ENCODE measurements at regions of chr4 and their contacts with region 1.

Region 1: DNA sequence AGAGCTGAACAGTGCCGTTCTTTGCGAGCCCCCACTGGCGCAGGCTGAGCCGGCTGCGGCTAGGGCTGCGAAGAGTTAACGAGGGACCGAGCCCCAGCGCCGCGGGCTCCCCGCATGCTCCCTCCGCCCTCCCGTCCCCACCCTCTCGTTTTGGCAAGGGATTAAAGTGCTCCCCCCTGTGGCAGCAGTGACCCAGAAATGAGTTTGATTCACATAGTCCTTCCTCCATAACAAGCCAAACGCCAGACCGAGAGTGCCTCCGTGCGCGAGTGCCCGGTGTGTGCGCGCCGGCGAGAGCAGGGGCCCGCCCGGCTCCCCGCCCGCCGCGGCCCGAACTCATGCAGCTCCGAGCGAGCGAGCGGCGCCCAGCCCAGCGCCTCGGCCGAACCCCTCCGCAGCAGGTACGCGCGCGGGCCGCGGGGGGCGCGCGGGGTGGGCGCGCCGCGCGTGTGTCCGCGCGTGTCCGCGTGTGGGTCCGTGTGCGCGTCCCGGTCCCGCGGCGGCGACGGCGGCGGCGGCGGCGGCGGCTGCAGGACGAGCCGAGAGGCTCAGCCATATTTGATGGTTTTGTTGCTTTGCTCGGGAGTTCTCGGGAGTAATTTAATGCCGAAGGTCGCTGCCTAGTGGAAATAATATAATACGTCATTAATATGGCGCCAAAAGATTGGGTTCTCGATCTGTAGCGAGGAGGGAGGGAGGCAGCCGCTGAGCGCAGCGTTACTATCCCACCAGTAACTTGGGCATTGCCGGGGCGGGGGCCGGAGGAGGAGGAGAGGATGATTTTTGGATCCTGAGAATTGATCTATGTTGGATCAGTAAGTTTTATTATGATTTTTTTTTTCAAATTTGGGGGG is at the start of gene JADE1:
- DNase-seq: peak; percentile 82 to 95 (median 90)
- ATAC-seq: peak; percentile 58
- H3K4me3 ChIP-seq: peak within 1 kb of the TSS; percentile 80 to 93
- H3K4me3 Mint-ChIP-seq: peak within 1 kb of the TSS; percentile 97
- H3K27ac ChIP-seq: peak within 1 kb of the TSS; percentile 85 to 95
- H3K27ac Mint-ChIP-seq: peak within 1 kb of the TSS; percentile 99
- H3K4me1 ChIP-seq: peaks cover 12% of the 10 kb centered on the region
- H3K4me1 Mint-ChIP-seq: peaks cover 22% of the 10 kb centered on the region
- H3K27me3 ChIP-seq: no peaks in the 10 kb centered on the region
- H3K27me3 Mint-ChIP-seq: no peaks in the 10 kb centered on the region
- CTCF ChIP-seq: peak; percentile 43
- total RNA-seq, gene JADE1: 77.5 to 82.2 TPM

Region 2: GRCh38 chr4:127880764-127881562 is 928.7 kb before region 1 on chr4 and contains the start of gene PLK4:
- CTCF ChIA-PET with region 1: no interaction called
- POLR2A ChIA-PET with region 1: interaction called, 4 read pairs
- intact Hi-C with region 1: loop called in 1 of 2 experiments (anchors 5 kb)
- DNase-seq: peak; percentile 87 to 97 (median 94)
- ATAC-seq: peak; percentile 92
- H3K4me3 ChIP-seq: peak within 1 kb of the TSS; percentile 75 to 84
- H3K4me3 Mint-ChIP-seq: peak within 1 kb of the TSS; percentile 98
- H3K27ac ChIP-seq: peak within 1 kb of the TSS; percentile 71 to 87
- H3K27ac Mint-ChIP-seq: peak within 1 kb of the TSS; percentile 97
- H3K4me1 ChIP-seq: peaks cover 19% of the 10 kb centered on the region
- H3K4me1 Mint-ChIP-seq: peaks cover 23% of the 10 kb centered on the region
- H3K27me3 ChIP-seq: no peaks in the 10 kb centered on the region
- H3K27me3 Mint-ChIP-seq: no peaks in the 10 kb centered on the region
- CTCF ChIP-seq: no peak
- total RNA-seq, gene PLK4: 4.5 to 5.9 TPM

Region 3: GRCh38 chr4:128191115-128191781 is 618.5 kb before region 1 on chr4:
- CTCF ChIA-PET with region 1: no interaction called
- POLR2A ChIA-PET with region 1: interaction called, 3 read pairs
- intact Hi-C with region 1: loop called (anchors 1 to 2 kb)
- DNase-seq: peak; percentile 21 to 85 (median 69)
- ATAC-seq: peak; percentile 100
- H3K4me3 ChIP-seq: no peak overlapping the region
- H3K4me3 Mint-ChIP-seq: no peak overlapping the region
- H3K27ac ChIP-seq: no peak overlapping the region
- H3K27ac Mint-ChIP-seq: no peak overlapping the region
- H3K4me1 ChIP-seq: no peaks in the 10 kb centered on the region
- H3K4me1 Mint-ChIP-seq: peaks cover 3% of the 10 kb centered on the region
- H3K27me3 ChIP-seq: no peaks in the 10 kb centered on the region
- H3K27me3 Mint-ChIP-seq: no peaks in the 10 kb centered on the region
- CTCF ChIP-seq: peak; percentile 96

Region 4: GRCh38 chr4:128574706-128575105 is 235.0 kb before region 1 on chr4:
- CTCF ChIA-PET with region 1: no interaction called
- POLR2A ChIA-PET with region 1: no interaction called
- intact Hi-C with region 1: loop called in 1 of 2 experiments (anchors 1 kb)
- DNase-seq: peak; percentile 1 to 69 (median 58)
- ATAC-seq: no peak
- H3K4me3 ChIP-seq: no peak overlapping the region
- H3K4me3 Mint-ChIP-seq: no peak overlapping the region
- H3K27ac ChIP-seq: no peak overlapping the region
- H3K27ac Mint-ChIP-seq: no peak overlapping the region
- H3K4me1 ChIP-seq: no peaks in the 10 kb centered on the region
- H3K4me1 Mint-ChIP-seq: no peaks in the 10 kb centered on the region
- H3K27me3 ChIP-seq: no peaks in the 10 kb centered on the region
- H3K27me3 Mint-ChIP-seq: peaks cover 7% of the 10 kb centered on the region
- CTCF ChIP-seq: peak; percentile 21

Region 5: DNA sequence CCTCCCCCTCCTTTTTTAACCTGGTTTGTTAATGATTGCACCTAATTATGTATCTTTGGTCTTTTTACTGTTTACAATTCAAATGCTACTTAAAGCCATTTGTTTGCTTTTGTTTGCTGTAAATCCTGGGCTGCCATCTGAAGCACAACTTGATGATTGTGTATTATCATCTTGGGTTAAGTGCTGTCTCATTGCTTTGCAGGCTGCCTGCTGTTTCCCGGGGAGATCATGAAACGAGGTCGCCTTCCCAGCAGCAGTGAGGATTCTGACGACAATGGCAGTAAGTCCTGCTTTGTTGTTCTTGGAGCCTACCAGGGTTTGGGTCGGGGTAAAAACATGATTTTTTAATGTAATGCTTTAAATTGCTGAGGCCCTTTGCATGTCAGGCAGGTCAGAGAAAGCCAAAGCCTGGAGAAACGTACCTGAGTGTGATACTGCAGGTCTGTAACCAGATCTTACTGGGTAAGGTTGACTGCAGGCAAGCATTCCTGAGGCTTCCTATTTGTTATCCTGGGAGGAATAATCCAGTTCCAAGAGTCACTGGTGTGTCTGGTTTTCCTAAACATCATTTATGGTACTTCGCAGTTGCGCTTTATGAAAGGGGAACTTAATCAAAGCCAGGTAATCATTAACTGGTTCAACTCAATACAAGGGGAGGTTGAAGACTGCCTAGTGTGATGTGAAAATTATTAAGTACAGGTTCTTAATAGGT is 22.0 kb after region 1 on chr4:
- CTCF ChIA-PET with region 1: no interaction called
- POLR2A ChIA-PET with region 1: interaction called, 4 read pairs
- intact Hi-C with region 1: loop called in 1 of 2 experiments (anchors 2 kb)
- DNase-seq: no peak
- ATAC-seq: no peak
- H3K4me3 ChIP-seq: no peak overlapping the region
- H3K4me3 Mint-ChIP-seq: no peak overlapping the region
- H3K27ac ChIP-seq: no peak overlapping the region
- H3K27ac Mint-ChIP-seq: peak overlapping the region; percentile 33
- H3K4me1 ChIP-seq: peaks cover 11% of the 10 kb centered on the region
- H3K4me1 Mint-ChIP-seq: peaks cover 77% of the 10 kb centered on the region
- H3K27me3 ChIP-seq: no peaks in the 10 kb centered on the region
- H3K27me3 Mint-ChIP-seq: no peaks in the 10 kb centered on the region
- CTCF ChIP-seq: no peak

Region 6: DNA sequence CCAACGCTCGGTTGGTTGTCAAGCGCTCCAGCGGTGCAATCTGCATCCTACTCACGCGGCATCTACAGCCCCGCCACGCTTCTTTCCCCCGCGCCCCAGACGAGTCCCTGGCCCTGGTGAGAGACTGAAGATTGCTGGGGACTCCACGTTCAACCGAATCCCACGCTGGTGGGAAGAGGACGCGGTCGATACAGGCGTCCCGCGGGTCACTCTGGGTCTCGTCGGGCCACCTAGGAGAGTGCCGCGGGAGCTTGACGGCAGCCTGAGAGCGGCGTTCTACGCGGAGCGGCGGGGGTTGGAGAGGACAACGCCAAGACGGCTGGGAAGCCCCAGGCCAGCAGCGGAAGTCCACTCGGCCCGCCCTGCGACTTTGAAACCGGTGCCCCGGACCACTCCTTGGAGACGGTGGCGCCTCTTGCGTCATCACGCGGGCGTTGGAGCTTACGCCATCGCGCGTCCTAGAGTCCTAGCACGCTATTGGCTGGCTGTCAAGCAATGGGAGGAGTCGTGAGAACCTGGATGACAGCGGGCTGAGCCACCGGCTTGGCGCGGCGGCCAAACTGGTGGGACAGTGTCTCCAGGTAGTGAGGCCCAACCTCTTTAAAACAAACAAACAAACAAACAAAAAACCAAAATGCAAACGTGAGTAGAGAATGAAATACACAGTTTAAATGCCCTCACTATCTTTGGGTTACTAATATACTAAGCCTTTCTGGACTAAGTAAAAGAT is 283.7 kb after region 1 on chr4 and contains the start of gene SCLT1:
- CTCF ChIA-PET with region 1: no interaction called
- POLR2A ChIA-PET with region 1: interaction called, 6 read pairs
- intact Hi-C with region 1: loop called (anchors 1 kb)
- DNase-seq: peak; percentile 88 to 99 (median 96)
- ATAC-seq: peak; percentile 92
- H3K4me3 ChIP-seq: peak within 1 kb of the TSS; percentile 87 to 94
- H3K4me3 Mint-ChIP-seq: peak within 1 kb of the TSS; percentile 24
- H3K27ac ChIP-seq: peak within 1 kb of the TSS; percentile 94 to 98
- H3K27ac Mint-ChIP-seq: no peak within 1 kb of the TSS
- H3K4me1 ChIP-seq: peaks cover 40% of the 10 kb centered on the region
- H3K4me1 Mint-ChIP-seq: peaks cover 49% of the 10 kb centered on the region
- H3K27me3 ChIP-seq: no peaks in the 10 kb centered on the region
- H3K27me3 Mint-ChIP-seq: no peaks in the 10 kb centered on the region
- CTCF ChIP-seq: no peak
- total RNA-seq, gene SCLT1: 19.8 to 21.7 TPM

Region 7: GRCh38 chr4:129254098-129254497 is 444.4 kb after region 1 on chr4:
- CTCF ChIA-PET with region 1: no interaction called
- POLR2A ChIA-PET with region 1: no interaction called
- intact Hi-C with region 1: no loop called
- DNase-seq: no peak
- ATAC-seq: no peak
- H3K4me3 ChIP-seq: no peak overlapping the region
- H3K4me3 Mint-ChIP-seq: no peak overlapping the region
- H3K27ac ChIP-seq: no peak overlapping the region
- H3K27ac Mint-ChIP-seq: no peak overlapping the region
- H3K4me1 ChIP-seq: no peaks in the 10 kb centered on the region
- H3K4me1 Mint-ChIP-seq: no peaks in the 10 kb centered on the region
- H3K27me3 ChIP-seq: no peaks in the 10 kb centered on the region
- H3K27me3 Mint-ChIP-seq: peaks cover 12% of the 10 kb centered on the region
- CTCF ChIP-seq: no peak

Measured in CD8-positive, alpha-beta T cell (primary cell).